ENCODE measurements at regions of chr12 and their contacts with region 1.

Region 1: DNA sequence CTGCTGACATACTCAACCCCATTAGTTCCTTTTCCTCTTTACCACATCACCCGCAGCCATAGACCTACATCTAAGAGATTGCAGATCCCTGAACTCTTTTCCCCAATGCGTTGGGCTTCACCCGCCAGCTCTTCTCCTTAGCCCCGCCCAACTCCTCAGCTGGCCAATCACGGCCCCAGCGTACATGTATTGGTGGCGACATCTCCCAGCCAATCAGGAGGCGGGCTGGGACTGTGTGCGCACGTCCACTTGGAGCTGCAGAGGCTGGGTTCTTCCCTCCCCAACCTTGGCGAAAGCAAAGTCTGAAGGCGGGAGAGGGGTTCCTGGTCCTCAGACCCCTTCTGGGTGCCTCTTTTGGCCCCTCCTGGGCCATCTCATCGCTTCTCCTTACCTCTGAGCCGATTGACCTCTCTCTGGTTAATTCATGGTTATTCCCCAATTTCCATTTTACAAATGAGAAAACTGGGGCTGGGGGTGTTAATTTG is 11.0 kb downstream of the PDE1B start:
- DNase-seq: peak; percentile 71 to 94 (median 86)
- ATAC-seq: peak; percentile 100
- H3K4me3 ChIP-seq: peak overlapping the region; percentile 72
- H3K4me3 Mint-ChIP-seq: peak overlapping the region; percentile 81 to 97 (median 90)
- H3K27ac ChIP-seq: peak overlapping the region; percentile 76
- H3K27ac Mint-ChIP-seq: peak overlapping the region; percentile 82 to 99 (median 92)
- H3K4me1 ChIP-seq: peaks cover 5 to 9% of the 10 kb centered on the region in 2 donors
- H3K4me1 Mint-ChIP-seq: peaks cover 20 to 42% (median 29%) of the 10 kb centered on the region in 7 donors
- H3K27me3 ChIP-seq: no peaks in the 10 kb centered on the region
- H3K27me3 Mint-ChIP-seq: no peaks in the 10 kb centered on the region

Region 2: DNA sequence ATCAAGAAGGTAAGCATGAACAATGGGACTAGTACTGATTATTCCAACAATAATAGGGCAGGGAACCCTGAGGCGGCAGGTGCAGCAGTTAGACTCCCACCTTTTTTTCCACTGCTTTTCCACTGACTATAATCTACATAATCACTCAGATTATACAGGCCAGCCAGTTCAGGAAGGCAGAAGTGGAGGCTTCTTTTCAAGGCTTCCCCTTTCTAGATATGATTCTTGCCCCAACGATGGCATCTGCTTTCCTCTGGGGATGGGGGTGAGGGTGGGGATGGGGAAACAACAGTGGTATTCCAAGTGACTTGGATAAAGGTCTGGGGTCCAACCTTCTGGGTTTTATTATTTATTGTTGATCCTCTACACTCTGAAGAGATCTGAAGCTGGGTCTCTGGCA is 62.5 kb before region 1 on chr12:
- CTCF ChIA-PET with region 1: no interaction called
- POLR2A ChIA-PET with region 1: interaction called, 3 read pairs
- intact Hi-C with region 1: loop called (anchors 2 to 5 kb)
- DNase-seq: no peak
- ATAC-seq: peak; percentile 3
- H3K4me3 ChIP-seq: peak overlapping the region; percentile 89
- H3K4me3 Mint-ChIP-seq: peak overlapping the region; percentile 97 to 99 (median 98)
- H3K27ac ChIP-seq: peak overlapping the region; percentile 77
- H3K27ac Mint-ChIP-seq: peak overlapping the region; percentile 88 to 98 (median 96)
- H3K4me1 ChIP-seq: peaks cover 19 to 31% of the 10 kb centered on the region in 2 donors
- H3K4me1 Mint-ChIP-seq: peaks cover 30 to 58% (median 41%) of the 10 kb centered on the region in 7 donors
- H3K27me3 ChIP-seq: no peaks in the 10 kb centered on the region
- H3K27me3 Mint-ChIP-seq: no peaks in the 10 kb centered on the region

Region 3: GRCh38 chr12:54549774-54550451 is 10.5 kb before region 1 on chr12:
- CTCF ChIA-PET with region 1: interaction called, 3 read pairs
- POLR2A ChIA-PET with region 1: interaction called, 18 read pairs
- intact Hi-C with region 1: loop called in 1 of 2 experiments (anchors 1 kb)
- DNase-seq: peak in 6 of 9 donors; percentile 4 to 28 (median 19)
- ATAC-seq: peak; percentile 51
- H3K4me3 ChIP-seq: peak overlapping the region; percentile 58
- H3K4me3 Mint-ChIP-seq: peak overlapping the region; percentile 82 to 92 (median 88)
- H3K27ac ChIP-seq: peak overlapping the region; percentile 17
- H3K27ac Mint-ChIP-seq: peak overlapping the region in 7 of 9 donors; percentile 25 to 92 (median 78)
- H3K4me1 ChIP-seq: peaks cover 6 to 10% of the 10 kb centered on the region in 2 donors
- H3K4me1 Mint-ChIP-seq: peaks cover 21 to 46% (median 33%) of the 10 kb centered on the region in 7 donors
- H3K27me3 ChIP-seq: no peaks in the 10 kb centered on the region
- H3K27me3 Mint-ChIP-seq: peaks cover 0 to 16% (median 0%) of the 10 kb centered on the region in 5 donors

Region 4: DNA sequence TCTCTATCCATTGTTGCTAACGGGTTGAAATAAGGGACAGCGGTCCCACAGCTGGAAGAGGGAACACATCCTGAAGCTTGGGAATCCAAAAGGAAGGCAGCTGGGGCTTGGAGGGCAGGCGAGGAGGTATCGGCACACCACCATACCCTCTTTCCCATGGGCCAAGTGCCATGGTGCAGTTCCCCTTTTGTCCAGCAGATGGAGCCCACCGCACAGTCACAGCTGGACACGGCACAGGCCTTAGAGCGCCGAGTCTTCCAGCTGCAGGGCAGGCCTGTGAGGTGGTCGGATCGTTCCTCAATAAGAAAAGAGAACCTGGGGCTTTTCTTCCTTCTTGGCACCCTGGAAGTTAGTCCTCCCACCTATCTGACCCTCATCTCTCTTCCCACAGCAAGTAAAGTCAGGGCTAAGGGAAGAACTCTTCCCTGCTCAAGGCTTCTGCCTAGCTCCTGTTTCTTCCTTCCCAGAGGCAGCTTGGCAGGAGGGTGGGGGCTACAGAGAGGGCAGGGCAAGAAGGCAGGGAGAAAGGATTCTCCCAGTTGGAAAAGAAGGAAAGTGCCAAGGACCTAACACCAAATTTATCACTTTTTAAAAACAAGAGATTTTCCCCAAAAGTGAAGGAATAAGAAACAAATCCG is 19.4 kb after region 1 on chr12:
- CTCF ChIA-PET with region 1: interaction called, 5 read pairs
- POLR2A ChIA-PET with region 1: no interaction called
- intact Hi-C with region 1: loop called in 1 of 2 experiments (anchors 2 kb)
- DNase-seq: peak; percentile 39 to 83 (median 70)
- ATAC-seq: peak; percentile 94
- H3K4me3 ChIP-seq: no peak overlapping the region
- H3K4me3 Mint-ChIP-seq: no peak overlapping the region
- H3K27ac ChIP-seq: no peak overlapping the region
- H3K27ac Mint-ChIP-seq: no peak overlapping the region
- H3K4me1 ChIP-seq: peaks cover 0 to 7% of the 10 kb centered on the region in 2 donors
- H3K4me1 Mint-ChIP-seq: peaks cover 0 to 9% (median 7%) of the 10 kb centered on the region in 7 donors
- H3K27me3 ChIP-seq: no peaks in the 10 kb centered on the region
- H3K27me3 Mint-ChIP-seq: peaks cover 5 to 14% (median 12%) of the 10 kb centered on the region in 5 donors

Measured in naive thymus-derived CD4-positive, alpha-beta T cell (primary cell).